GM12878 (cell line): ENCODE measurements at regions of chr10 and their contacts with region 1.

Region 1: DNA sequence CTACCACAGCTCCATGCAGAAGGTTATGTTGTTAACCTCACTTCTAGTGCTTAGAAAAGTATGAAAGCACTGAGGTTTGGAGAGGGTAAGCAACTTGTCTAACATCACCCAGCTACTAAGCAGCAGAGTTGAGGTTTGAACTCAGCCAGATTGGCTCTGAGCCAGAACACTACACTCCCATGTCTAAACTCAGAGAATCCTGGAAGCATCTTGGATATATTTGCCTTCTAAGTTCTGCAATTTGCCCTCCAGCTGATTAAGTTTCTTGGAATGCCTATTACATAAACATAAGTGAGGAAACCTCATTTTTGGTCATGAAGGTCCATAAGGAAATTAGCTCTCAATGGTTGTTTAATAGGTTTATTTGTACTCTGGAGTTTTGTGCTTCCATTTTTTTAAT is 78.1 kb upstream of the PHYHIPL start:
- DNase-seq: no peak
- ATAC-seq: no peak
- H3K4me3 ChIP-seq: no peak overlapping the region
- H3K27ac ChIP-seq: no peak overlapping the region
- H3K4me1 ChIP-seq: no peaks in the 10 kb centered on the region
- H3K27me3 ChIP-seq: no peaks in the 10 kb centered on the region
- CTCF ChIP-seq: no peak
- EP300 ChIP-seq: no peak
- POLR2A ChIP-seq: no peak
- RAD21 ChIP-seq: no peak

Region 2: DNA sequence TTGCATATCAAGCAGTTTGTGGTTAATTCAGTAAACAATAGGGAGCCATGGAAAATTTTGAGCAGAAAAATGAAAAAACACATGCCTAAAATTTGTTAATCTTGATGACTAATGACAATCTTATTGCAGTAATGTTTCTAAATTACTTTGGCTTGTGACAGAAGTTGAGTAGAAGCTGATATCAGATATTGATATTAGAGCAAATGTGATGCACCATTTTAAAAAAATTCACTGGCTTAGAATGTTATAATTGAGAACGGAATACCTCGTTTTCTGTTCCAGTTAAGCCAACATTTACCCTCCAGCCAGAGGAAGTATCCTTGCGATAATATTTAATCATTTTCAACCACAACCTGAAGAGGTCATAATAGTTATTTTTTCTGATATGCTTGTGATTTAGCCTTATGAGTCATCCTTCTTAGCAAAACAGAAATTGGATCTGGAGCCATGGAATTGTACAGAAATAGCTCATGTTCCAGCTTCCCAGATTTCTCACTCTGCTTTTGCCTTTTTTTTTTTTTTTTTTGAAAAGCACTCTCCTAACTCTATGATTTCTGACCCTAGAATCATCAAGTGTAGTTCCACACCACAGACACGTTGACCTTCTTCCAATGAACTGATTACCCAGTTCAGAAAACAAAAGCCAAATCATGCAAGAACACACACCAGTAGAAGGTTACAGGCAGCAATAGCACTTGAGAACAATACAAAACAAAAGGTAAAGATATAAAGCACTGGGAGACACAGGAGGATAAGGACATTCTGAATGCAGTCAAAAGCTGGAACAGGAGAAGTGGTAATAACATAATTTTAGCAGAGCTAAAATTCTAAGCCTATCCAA is 18.8 kb before region 1 on chr10:
- CTCF ChIA-PET with region 1: interaction called, 19 read pairs
- POLR2A ChIA-PET with region 1: no interaction called
- RAD21 ChIA-PET with region 1: interaction called, 30 read pairs
- SMC1A ChIA-PET with region 1: interaction called, 328 read pairs
- in situ Hi-C with region 1: no loop called
- intact Hi-C with region 1: no loop called
- DNase-seq: no peak
- ATAC-seq: no peak
- H3K4me3 ChIP-seq: no peak overlapping the region
- H3K27ac ChIP-seq: no peak overlapping the region
- H3K4me1 ChIP-seq: 0 out of 2 replicates have a peak, but pooled peaks cover 3% of the 10 kb centered on the region
- H3K27me3 ChIP-seq: no peaks in the 10 kb centered on the region
- CTCF ChIP-seq: no peak
- EP300 ChIP-seq: no peak
- POLR2A ChIP-seq: no peak
- RAD21 ChIP-seq: no peak

Region 3: DNA sequence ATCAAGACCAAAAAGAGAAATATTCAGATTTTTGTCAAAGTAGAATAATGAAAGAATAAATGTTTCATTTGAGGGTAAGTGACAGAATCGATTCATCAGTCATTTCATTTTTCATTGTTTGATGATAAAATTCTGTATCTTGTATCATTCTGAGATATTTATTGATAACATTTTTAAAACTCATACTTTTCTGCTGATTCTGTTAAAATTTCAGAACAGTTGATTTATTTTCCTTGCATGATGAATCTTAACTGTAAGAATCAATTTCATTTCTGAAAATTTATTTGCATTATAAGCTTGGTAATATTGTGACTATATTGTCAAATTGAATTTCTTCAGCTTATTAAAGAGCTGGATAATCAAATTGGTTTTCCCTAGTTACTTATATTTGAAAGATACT is 91.9 kb after region 1 on chr10:
- CTCF ChIA-PET with region 1: no interaction called
- POLR2A ChIA-PET with region 1: no interaction called
- RAD21 ChIA-PET with region 1: no interaction called
- SMC1A ChIA-PET with region 1: no interaction called
- in situ Hi-C with region 1: no loop called
- intact Hi-C with region 1: no loop called
- DNase-seq: no peak
- ATAC-seq: no peak
- H3K4me3 ChIP-seq: no peak overlapping the region
- H3K27ac ChIP-seq: no peak overlapping the region
- H3K4me1 ChIP-seq: no peaks in the 10 kb centered on the region
- H3K27me3 ChIP-seq: no peaks in the 10 kb centered on the region
- CTCF ChIP-seq: no peak
- EP300 ChIP-seq: no peak
- POLR2A ChIP-seq: no peak
- RAD21 ChIP-seq: no peak

Region 4: GRCh38 chr10:59290448-59290847 is 192.1 kb after region 1 on chr10:
- CTCF ChIA-PET with region 1: no interaction called
- POLR2A ChIA-PET with region 1: no interaction called
- RAD21 ChIA-PET with region 1: no interaction called
- SMC1A ChIA-PET with region 1: no interaction called
- in situ Hi-C with region 1: no loop called
- intact Hi-C with region 1: no loop called
- DNase-seq: no peak
- ATAC-seq: peak; percentile 57
- H3K4me3 ChIP-seq: no peak overlapping the region
- H3K27ac ChIP-seq: no peak overlapping the region
- H3K4me1 ChIP-seq: no peaks in the 10 kb centered on the region
- H3K27me3 ChIP-seq: 0 out of 4 replicates have a peak, but pooled peaks cover 0 to 1% of the 10 kb centered on the region in 2 experiments
- CTCF ChIP-seq: peak; percentile 16 to 38 (median 27); a peak in 4 of 6 replicates
- EP300 ChIP-seq: no peak
- POLR2A ChIP-seq: no peak
- RAD21 ChIP-seq: peak; percentile 51